SK-N-SH (cell line): ENCODE measurements at regions of chr11 and their contacts with region 1.

Region 1: GRCh38 chr11:13955971-13956421 is 6.5 kb upstream of the SPON1 start:
- DNase-seq: peak; percentile 44
- H3K4me3 ChIP-seq: no peak overlapping the region; a peak in 1 of 4 replicates
- H3K27ac ChIP-seq: no peak overlapping the region
- H3K4me1 ChIP-seq: peaks cover 0 to 6% of the 10 kb centered on the region in 2 experiments; a peak in 1 of 4 replicates
- H3K27me3 ChIP-seq: peaks cover 11% of the 10 kb centered on the region; the same call in 1 of the 2 replicates
- CTCF ChIP-seq: peak; percentile 86
- EP300 ChIP-seq: no peak
- RAD21 ChIP-seq: peak; percentile 87

Region 2: DNA sequence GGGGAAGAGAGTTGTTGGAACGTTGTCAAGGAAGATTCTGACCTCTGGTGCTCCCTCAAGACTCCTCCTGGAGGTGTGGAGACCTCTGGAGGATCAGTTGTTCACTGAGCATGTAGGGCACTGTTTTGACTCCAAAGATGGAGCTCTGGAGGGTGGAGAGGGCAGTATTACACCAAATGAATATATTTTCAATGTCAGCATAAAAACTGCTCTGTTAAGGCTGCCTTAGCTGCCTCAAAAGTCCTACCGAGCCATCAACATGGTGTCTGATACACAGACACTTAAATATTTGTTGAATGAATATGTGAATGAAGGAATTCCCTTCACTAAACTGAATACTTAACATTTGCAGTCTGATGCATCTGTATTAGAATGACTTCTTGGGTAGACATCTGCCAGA is 137.7 kb before region 1 on chr11:
- CTCF ChIA-PET with region 1: no interaction called
- POLR2A ChIA-PET with region 1: no interaction called
- DNase-seq: no peak
- H3K4me3 ChIP-seq: no peak overlapping the region
- H3K27ac ChIP-seq: no peak overlapping the region
- H3K4me1 ChIP-seq: no peaks in the 10 kb centered on the region
- H3K27me3 ChIP-seq: no peaks in the 10 kb centered on the region
- CTCF ChIP-seq: no peak
- EP300 ChIP-seq: no peak
- RAD21 ChIP-seq: no peak

Region 3: GRCh38 chr11:13923716-13924650 is 32.0 kb before region 1 on chr11:
- CTCF ChIA-PET with region 1: no interaction called
- POLR2A ChIA-PET with region 1: no interaction called
- DNase-seq: no peak
- H3K4me3 ChIP-seq: no peak overlapping the region
- H3K27ac ChIP-seq: no peak overlapping the region
- H3K4me1 ChIP-seq: no peaks in the 10 kb centered on the region; a peak in 1 of 4 replicates
- H3K27me3 ChIP-seq: no peaks in the 10 kb centered on the region
- CTCF ChIP-seq: no peak
- EP300 ChIP-seq: no peak
- RAD21 ChIP-seq: no peak

Region 4: DNA sequence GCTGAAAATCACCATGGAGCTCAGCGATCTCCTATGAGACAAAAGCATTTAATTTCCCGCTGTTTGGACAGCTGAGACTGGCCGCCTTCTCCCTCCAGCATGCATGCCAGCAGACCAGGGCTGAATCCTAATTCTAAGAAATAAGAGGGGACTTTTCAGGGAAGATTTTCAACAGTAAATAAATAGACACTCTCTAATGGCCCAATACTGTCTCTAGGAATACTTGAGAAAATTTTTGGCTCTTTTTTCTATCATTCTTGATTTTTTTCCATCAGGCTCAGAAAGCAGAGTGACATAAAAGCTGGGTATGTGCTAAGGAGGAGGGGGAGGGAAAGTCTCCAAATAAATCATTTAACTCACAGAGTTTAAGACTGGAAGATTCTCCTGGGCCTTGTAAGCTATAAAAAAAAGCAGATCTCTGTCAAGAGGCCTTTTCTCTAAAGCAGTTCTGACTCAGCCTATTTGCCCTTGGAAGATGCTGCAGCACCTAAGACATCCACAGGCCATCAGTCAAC is 11.0 kb before region 1 on chr11:
- CTCF ChIA-PET with region 1: interaction called, 29 read pairs
- POLR2A ChIA-PET with region 1: no interaction called
- DNase-seq: no peak
- H3K4me3 ChIP-seq: no peak overlapping the region
- H3K27ac ChIP-seq: no peak overlapping the region
- H3K4me1 ChIP-seq: no peaks in the 10 kb centered on the region; a peak in 1 of 4 replicates
- H3K27me3 ChIP-seq: no peaks in the 10 kb centered on the region
- CTCF ChIP-seq: no peak
- EP300 ChIP-seq: no peak
- RAD21 ChIP-seq: no peak

Region 5: DNA sequence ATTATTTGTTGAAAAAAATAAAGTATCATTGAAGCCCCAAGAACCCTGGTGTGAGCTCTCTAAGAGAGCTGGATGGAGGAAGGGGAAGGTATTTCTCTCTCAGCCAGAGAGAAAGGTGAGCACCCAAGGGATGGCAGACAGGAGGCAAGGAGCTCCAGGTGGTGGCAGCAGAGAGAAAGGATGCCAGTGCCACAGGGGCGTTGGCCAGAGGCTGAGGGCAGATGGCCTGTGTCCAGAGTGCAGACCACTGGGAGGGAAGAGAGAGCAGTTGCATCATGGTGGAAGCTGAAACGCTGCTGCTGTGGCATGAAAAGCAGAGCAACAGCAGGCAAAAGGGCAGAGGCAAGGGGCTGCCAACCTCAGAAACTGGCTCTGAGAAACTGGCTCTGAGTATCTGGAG is 15.0 kb after region 1 on chr11:
- CTCF ChIA-PET with region 1: interaction called, 29 read pairs
- POLR2A ChIA-PET with region 1: no interaction called
- DNase-seq: peak; percentile 64
- H3K4me3 ChIP-seq: no peak overlapping the region
- H3K27ac ChIP-seq: no peak overlapping the region
- H3K4me1 ChIP-seq: peaks cover 0 to 3% of the 10 kb centered on the region in 2 experiments; a peak in 1 of 4 replicates
- H3K27me3 ChIP-seq: peaks cover 7% of the 10 kb centered on the region; the same call in 1 of the 2 replicates
- CTCF ChIP-seq: no peak; the same call in 1 of the 2 replicates
- EP300 ChIP-seq: no peak
- RAD21 ChIP-seq: peak; percentile 69

Region 6: DNA sequence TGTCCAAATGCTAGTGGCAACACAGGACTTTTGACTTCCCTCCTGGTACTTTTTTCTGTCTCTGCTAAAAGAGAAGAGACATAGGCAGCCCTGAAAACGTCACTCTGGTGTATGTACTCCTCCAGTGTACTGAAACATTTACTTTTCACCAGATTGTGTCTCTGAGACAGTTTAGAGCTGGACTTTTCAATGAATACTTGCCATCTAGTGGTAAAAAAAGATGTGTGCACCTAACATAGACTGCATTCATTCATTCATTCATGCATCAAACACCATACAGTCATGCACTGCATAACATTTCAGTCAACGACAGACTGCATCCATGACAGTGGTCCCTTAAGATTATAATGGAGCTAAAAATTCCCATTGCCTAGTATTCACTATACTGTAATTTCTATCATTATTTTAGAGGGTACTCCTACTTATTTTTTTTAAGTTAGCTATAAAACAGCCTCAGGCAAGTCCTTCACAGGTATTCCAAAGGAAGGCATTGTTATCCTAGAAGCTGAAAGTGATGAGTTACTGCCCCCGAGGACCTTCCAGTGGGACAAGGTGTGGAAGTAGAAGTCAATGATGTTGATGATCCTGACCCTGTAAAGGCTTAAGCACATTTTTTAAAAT is 192.8 kb after region 1 on chr11:
- CTCF ChIA-PET with region 1: interaction called, 75 read pairs
- POLR2A ChIA-PET with region 1: interaction called, 4 read pairs
- DNase-seq: no peak
- H3K4me3 ChIP-seq: no peak overlapping the region
- H3K27ac ChIP-seq: no peak overlapping the region
- H3K4me1 ChIP-seq: peaks cover 0 to 10% of the 10 kb centered on the region in 2 experiments; a peak in 2 of 4 replicates
- H3K27me3 ChIP-seq: no peaks in the 10 kb centered on the region
- CTCF ChIP-seq: peak; percentile 62
- EP300 ChIP-seq: no peak
- RAD21 ChIP-seq: peak; percentile 70

Region 7: DNA sequence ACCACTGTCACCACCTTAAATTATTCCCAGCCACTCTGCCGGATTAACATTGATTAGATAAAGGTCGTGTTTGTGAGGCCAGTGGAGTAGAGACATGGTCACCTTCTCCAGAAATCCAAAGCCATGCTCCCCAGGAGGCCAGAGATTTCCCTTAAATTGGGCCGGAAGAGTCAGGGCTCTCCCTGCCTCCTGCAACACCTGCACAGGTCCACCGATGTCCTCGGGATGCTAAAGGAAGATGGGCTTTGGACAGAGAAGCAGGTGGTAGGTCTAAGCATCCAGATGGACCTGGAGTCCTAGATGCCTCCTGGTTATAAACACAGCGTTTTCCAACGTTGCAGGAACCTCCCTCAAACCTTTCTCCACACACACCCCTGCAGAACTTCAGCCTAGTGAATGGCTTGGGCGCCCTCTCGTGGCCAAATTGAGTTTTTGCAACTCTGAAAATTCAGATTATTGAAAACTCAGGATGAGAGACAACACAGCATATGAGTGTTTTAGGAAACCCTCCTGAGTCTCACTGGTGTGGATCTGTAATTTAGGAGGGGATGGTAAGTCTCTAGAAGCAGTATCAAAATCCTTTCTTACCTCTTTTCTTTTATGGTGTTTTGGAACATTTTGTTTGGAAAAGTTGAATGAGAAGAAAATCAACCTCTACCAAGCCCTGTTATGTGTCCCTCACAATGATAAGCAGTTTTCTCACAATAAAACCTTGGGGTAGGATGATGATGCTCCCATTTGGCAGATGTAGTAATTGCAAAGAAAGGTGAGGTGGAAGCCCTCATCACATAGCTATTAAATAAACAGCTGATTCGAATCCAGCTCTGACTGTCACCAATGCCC is 293.3 kb after region 1 on chr11:
- CTCF ChIA-PET with region 1: interaction called, 101 read pairs
- POLR2A ChIA-PET with region 1: interaction called, 3 read pairs
- DNase-seq: peak; percentile 66
- H3K4me3 ChIP-seq: no peak overlapping the region
- H3K27ac ChIP-seq: no peak overlapping the region
- H3K4me1 ChIP-seq: peaks cover 0 to 17% of the 10 kb centered on the region in 2 experiments; a peak in 1 of 4 replicates
- H3K27me3 ChIP-seq: peaks cover 20% of the 10 kb centered on the region; the same call in 1 of the 2 replicates
- CTCF ChIP-seq: peak; percentile 93
- EP300 ChIP-seq: no peak
- RAD21 ChIP-seq: peak; percentile 97